GM23248 (cell line): ENCODE measurements at regions of chr5 and their contacts with region 1.

Region 1: GRCh38 chr5:142151436-142152383 is 43.1 kb downstream of the NDFIP1 start:
- DNase-seq: peak; percentile 78
- H3K4me3 ChIP-seq: no peak overlapping the region
- H3K27ac ChIP-seq: no peak overlapping the region; the same call in 1 of the 2 replicates
- H3K4me1 ChIP-seq: peaks cover 8% of the 10 kb centered on the region
- H3K27me3 ChIP-seq: no peaks in the 10 kb centered on the region

Region 2: DNA sequence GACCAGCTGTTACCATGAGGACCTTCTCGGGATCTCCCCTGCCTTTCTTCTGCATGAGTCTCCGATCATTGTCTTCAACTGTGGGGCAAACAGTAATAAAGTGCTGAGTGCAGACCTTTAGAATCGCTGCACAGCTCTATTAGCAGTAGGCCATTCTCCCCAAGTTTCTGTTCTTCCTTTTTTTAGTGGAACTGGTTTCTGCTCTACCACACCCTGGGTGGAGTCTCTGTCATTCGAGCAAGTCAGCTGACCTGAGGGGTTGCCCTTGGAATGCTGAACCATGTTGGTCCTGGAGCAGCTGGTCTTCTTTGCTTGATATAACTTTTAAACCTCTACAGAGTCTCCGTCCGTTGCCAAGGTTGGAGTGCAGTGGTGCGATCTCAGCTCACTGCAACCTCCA is 105.5 kb before region 1 on chr5:
- in situ Hi-C with region 1: no loop called
- DNase-seq: no peak
- H3K4me3 ChIP-seq: no peak overlapping the region
- H3K27ac ChIP-seq: no peak overlapping the region
- H3K4me1 ChIP-seq: no peaks in the 10 kb centered on the region
- H3K27me3 ChIP-seq: no peaks in the 10 kb centered on the region

Region 3: DNA sequence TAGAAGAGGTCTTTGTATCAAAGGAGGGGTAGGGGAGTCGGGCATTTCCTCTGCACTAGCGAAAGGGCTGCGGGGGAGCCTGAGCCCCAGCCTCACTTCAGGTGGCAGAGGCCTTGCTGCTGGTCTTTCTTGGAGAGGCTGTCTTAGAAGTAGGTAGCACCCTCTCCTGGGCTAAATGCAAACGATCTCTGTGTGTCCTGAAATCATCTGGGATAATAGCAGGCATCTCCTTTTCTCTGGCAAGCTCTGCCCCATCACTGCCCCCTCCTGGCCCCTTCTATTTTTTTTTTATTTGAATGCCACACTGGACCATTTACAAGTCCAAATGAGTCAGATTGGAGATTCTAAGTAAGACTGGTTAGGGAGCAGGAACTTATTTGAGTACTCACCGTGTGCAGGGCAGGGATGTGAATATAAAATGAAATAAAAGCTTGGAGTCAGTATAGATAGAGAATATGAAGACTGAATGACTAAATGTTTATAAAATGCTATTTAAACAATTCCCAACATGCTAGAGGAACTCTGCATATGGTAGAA is 397.1 kb after region 1 on chr5:
- in situ Hi-C with region 1: loop called (anchors 5 kb)
- DNase-seq: peak; percentile 94
- H3K4me3 ChIP-seq: no peak overlapping the region
- H3K27ac ChIP-seq: no peak overlapping the region
- H3K4me1 ChIP-seq: peaks cover 28% of the 10 kb centered on the region
- H3K27me3 ChIP-seq: no peaks in the 10 kb centered on the region

Region 4: GRCh38 chr5:142669477-142669876 is 517.8 kb after region 1 on chr5:
- in situ Hi-C with region 1: no loop called
- DNase-seq: peak; percentile 59
- H3K4me3 ChIP-seq: no peak overlapping the region
- H3K27ac ChIP-seq: no peak overlapping the region
- H3K4me1 ChIP-seq: peaks cover 31% of the 10 kb centered on the region
- H3K27me3 ChIP-seq: no peaks in the 10 kb centered on the region

Region 5: GRCh38 chr5:142699184-142699720 is 547.5 kb after region 1 on chr5:
- in situ Hi-C with region 1: loop called (anchors 25 kb)
- DNase-seq: peak; percentile 87
- H3K4me3 ChIP-seq: no peak overlapping the region
- H3K27ac ChIP-seq: no peak overlapping the region
- H3K4me1 ChIP-seq: peaks cover 23% of the 10 kb centered on the region
- H3K27me3 ChIP-seq: no peaks in the 10 kb centered on the region

Region 6: GRCh38 chr5:142888469-142889085 is 736.9 kb after region 1 on chr5:
- in situ Hi-C with region 1: loop called (anchors 25 kb)
- DNase-seq: peak; percentile 75
- H3K4me3 ChIP-seq: no peak overlapping the region
- H3K27ac ChIP-seq: no peak overlapping the region
- H3K4me1 ChIP-seq: peaks cover 9% of the 10 kb centered on the region
- H3K27me3 ChIP-seq: no peaks in the 10 kb centered on the region